Panc1 (cell line): ENCODE measurements at regions of chr6 and their contacts with region 1.

Region 1: DNA sequence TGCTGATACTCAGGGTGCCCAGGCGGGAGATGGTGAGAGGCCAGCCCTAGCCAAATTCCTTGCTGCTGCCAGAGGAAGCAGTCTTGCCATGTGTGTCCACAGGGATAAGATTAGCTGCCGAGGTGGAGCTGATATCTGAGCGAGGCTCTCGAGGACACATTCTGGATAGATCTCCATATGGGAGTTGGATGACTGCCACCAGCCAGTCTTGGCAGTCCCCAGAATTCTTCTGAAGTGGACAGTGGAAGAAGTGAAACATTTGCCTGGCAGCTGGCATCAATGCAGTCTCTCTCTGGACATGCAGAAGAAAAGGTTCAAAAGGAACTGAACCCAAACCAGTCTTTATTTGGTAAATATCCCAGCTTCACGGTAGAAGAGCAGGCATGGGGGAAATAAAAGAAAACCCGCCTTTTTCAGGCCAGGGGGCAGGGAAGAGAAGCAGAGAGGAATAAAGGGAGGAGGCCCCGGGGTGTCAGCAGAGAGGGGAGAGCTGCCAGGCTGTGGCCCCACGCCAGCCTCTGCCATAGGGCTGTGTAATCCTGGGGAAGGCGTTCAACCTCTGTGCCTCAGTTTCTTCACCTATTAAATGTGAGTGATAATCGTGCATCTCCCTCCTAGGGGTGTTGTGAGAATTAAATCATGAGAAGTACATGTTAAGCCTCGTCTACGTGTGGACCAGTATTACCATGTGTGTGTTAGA is 3.7 kb upstream of the FUCA2 start:
- DNase-seq: no peak
- ATAC-seq: no peak
- H3K4me3 ChIP-seq: no peak overlapping the region
- H3K27ac ChIP-seq: no peak overlapping the region
- H3K4me1 ChIP-seq: peaks cover 5% of the 10 kb centered on the region; the same call in 1 of the 2 replicates
- H3K27me3 ChIP-seq: 0 out of 2 replicates have a peak, but pooled peaks cover 2% of the 10 kb centered on the region
- CTCF ChIP-seq: no peak

Region 2: GRCh38 chr6:143215363-143215762 is 299.8 kb before region 1 on chr6:
- CTCF ChIA-PET with region 1: no interaction called
- POLR2A ChIA-PET with region 1: interaction called, 11 read pairs
- in situ Hi-C with region 1: no loop called
- intact Hi-C with region 1: no loop called
- DNase-seq: no peak
- ATAC-seq: no peak
- H3K4me3 ChIP-seq: no peak overlapping the region
- H3K27ac ChIP-seq: no peak overlapping the region
- H3K4me1 ChIP-seq: no peaks in the 10 kb centered on the region
- H3K27me3 ChIP-seq: no peaks in the 10 kb centered on the region
- CTCF ChIP-seq: no peak

Region 3: DNA sequence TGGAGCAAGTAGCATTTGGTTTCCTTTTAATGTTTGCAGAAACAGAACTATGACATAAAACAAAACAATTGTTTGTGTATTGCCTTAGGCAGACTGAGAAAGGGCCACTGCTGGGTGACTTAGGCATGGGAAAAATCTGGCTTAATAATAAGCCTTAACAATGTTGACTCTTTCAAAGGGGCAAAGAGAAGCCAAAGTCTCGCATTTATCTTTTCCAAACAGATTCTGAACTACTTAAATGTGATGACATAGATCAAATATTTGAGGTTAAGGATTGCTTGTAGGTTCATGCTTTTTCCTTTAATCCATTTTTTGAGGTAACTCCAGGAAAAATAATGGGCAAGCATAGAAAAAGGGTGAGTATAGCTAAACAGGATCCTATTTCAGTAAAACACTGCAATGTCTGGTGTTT is 104.3 kb before region 1 on chr6:
- CTCF ChIA-PET with region 1: no interaction called
- POLR2A ChIA-PET with region 1: no interaction called
- in situ Hi-C with region 1: no loop called
- intact Hi-C with region 1: no loop called
- DNase-seq: no peak
- ATAC-seq: no peak
- H3K4me3 ChIP-seq: no peak overlapping the region
- H3K27ac ChIP-seq: no peak overlapping the region
- H3K4me1 ChIP-seq: no peaks in the 10 kb centered on the region
- H3K27me3 ChIP-seq: no peaks in the 10 kb centered on the region
- CTCF ChIP-seq: no peak